ENCODE measurements at regions of chr6 and their contacts with region 1.

Region 1: DNA sequence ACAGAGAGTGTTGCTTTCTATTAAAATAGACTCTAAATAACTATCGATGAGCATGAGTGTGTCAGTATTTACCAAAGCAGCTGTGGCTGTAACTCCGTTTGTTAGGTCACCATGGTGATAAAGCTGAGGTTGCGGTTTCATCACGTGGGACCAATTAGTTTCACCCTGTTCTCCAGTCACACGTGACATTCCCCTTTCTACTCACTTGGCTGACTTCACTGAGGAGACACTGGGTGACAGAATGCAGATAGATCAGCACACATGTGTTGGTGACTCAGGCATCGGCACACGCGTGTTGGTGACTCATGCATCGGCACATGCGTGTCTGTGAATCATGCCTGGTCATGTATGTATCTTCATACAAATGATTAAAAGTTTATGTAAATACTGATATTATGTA is 285.4 kb downstream of the THBS2 start:
- DNase-seq: no peak

Region 2: DNA sequence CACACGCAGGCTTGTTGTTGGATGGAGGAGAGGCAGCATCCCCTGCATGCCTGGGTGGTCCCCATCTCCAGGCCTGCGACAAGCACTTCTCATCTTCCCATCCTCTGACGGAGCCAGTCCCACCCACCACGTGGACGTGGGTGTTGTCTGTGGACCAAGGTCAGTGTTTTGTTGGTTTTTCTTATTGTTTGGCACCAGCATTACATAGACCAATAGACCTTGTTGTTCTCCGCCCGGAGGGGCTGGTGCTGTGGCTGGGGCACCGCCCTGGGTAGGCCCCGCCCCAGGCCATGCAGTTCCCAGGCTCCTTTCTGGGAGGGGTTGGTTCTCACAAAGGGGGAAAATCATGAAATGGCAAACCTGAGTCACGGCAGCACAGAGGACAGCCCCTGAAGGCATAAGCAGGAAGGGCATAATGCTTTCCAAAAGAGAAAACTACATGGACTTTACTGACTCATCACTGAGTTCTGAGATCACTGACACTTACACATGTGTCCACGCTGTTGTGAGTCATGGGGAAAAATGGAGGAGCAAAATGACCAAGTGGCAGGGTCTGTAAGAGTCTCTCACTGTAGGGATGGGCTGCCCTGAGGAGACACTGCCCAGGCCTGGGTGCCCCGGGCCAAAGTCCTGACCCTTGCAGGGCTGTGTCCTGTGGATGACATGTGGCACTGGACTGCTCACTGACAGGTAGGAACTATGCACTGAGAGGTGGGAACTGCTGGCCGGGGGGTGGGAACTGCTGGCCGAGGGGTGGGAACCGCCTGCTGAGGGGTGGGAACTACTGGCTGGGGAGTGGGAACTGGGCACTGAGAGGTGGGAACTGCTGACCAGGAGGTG is 194.7 kb after region 1 on chr6:
- intact Hi-C with region 1: loop called (anchors 10 kb)
- DNase-seq: no peak

Measured in cardiac septum (tissue), 1 donor.